Caco-2 (cell line): ENCODE measurements at regions of chr3 and their contacts with region 1.

Region 1: GRCh38 chr3:130746246-130747039 is at the start of gene PIK3R4:
- DNase-seq: peak; percentile 96 to 98
- H3K4me3 ChIP-seq: peak within 1 kb of the TSS; percentile 86
- H3K4me3 Mint-ChIP-seq: no peak within 1 kb of the TSS
- H3K27ac Mint-ChIP-seq: peak within 1 kb of the TSS; percentile 96
- H3K4me1 ChIP-seq: peaks cover 6% of the 10 kb centered on the region
- H3K4me1 Mint-ChIP-seq: peaks cover 8% of the 10 kb centered on the region
- H3K27me3 ChIP-seq: no peaks in the 10 kb centered on the region
- H3K27me3 Mint-ChIP-seq: peaks cover 2% of the 10 kb centered on the region
- CTCF ChIP-seq: no peak
- total RNA-seq, gene PIK3R4: 20.0 and 23.1 TPM in 2 replicates

Region 2: DNA sequence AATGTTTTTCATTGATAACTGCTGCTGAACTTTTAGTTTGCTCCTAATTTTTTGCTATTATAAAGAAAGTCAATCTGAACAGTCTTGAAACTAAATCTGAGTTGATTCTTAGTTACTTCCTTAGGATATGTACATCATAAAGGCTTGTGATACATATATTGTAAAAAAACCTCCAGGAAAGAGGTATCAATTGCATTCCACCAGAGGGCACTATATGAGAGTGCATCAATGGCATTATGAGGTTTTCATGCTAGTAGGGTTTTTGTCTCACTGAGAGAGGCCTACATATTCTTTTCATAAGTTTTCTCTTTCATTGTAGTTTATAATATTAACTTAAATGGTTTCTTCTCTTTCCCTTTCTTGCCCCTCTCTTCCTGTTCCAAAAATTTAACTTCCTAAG is 46.7 kb before region 1 on chr3:
- CTCF ChIA-PET with region 1: no interaction called
- POLR2A ChIA-PET with region 1: no interaction called
- intact Hi-C with region 1: loop called (anchors 5 kb)
- DNase-seq: peak in 1 of 2 experiments; percentile 27
- H3K4me3 ChIP-seq: no peak overlapping the region
- H3K4me3 Mint-ChIP-seq: no peak overlapping the region
- H3K27ac Mint-ChIP-seq: no peak overlapping the region
- H3K4me1 ChIP-seq: 0 out of 2 replicates have a peak, but pooled peaks cover 4% of the 10 kb centered on the region
- H3K4me1 Mint-ChIP-seq: peaks cover 12% of the 10 kb centered on the region
- H3K27me3 ChIP-seq: no peaks in the 10 kb centered on the region
- H3K27me3 Mint-ChIP-seq: no peaks in the 10 kb centered on the region
- CTCF ChIP-seq: peak in 1 of 2 experiments; percentile 73

Region 3: GRCh38 chr3:130733236-130733875 is 13.1 kb before region 1 on chr3:
- CTCF ChIA-PET with region 1: no interaction called
- POLR2A ChIA-PET with region 1: no interaction called
- intact Hi-C with region 1: loop called (anchors 2 kb)
- DNase-seq: no peak
- H3K4me3 ChIP-seq: no peak overlapping the region; the same call in 1 of the 2 replicates
- H3K4me3 Mint-ChIP-seq: peak overlapping the region; percentile 9
- H3K27ac Mint-ChIP-seq: no peak overlapping the region
- H3K4me1 ChIP-seq: peaks cover 22% of the 10 kb centered on the region
- H3K4me1 Mint-ChIP-seq: peaks cover 6% of the 10 kb centered on the region
- H3K27me3 ChIP-seq: no peaks in the 10 kb centered on the region
- H3K27me3 Mint-ChIP-seq: no peaks in the 10 kb centered on the region
- CTCF ChIP-seq: no peak

Region 4: DNA sequence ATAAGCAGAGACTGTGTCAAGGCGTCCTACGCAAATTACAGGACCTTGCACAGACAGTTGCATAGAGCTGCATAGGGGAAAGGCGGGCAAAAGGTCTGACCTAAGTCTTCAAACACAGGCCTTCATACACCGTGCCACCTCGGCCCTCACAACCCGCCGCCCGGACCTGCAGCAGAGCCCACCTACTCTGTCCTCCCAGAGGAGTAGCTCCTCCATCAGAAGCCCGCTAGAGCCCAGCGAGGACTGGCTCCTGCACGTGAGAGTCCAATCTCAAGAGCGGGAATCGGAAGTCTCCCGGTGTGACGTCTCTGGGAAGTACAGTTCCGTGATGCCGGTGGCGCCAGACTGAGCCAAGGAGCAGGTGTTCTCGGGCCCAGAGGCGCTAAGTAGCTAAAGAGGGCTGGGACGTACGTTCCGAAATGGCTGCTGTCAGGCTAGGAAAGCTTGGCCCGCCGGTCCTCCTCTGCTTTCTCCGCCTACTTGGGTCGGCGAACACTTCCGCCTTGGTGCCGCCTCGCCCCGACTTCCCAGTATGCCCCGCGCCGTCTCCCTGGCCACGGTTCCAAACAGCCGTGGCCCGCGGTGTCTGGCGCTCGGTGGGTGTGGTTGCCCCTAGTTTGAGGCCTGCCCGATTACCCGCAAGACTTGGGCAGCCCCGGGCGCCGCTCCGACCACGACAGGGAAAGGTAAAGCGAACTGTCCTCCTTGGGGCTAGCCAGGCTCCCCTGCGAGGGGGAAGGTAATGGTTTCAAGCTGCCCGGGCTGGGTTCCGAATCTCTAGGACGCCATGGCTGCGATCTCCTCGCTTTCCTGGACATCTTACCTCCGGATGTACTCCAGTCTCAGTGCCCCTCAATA is 280.1 kb after region 1 on chr3 and contains the starts of genes ASTE1 and NEK11:
- CTCF ChIA-PET with region 1: no interaction called
- POLR2A ChIA-PET with region 1: interaction called, 3 read pairs
- intact Hi-C with region 1: loop called (anchors 10 kb)
- DNase-seq: peak; percentile 88 to 92
- H3K4me3 ChIP-seq: peak within 1 kb of the TSS; percentile 60
- H3K4me3 Mint-ChIP-seq: peak within 1 kb of the TSS; percentile 82
- H3K27ac Mint-ChIP-seq: peak within 1 kb of the TSS; percentile 95
- H3K4me1 ChIP-seq: peaks cover 19% of the 10 kb centered on the region; the same call in 1 of the 2 replicates
- H3K4me1 Mint-ChIP-seq: peaks cover 23% of the 10 kb centered on the region
- H3K27me3 ChIP-seq: no peaks in the 10 kb centered on the region
- H3K27me3 Mint-ChIP-seq: no peaks in the 10 kb centered on the region
- CTCF ChIP-seq: no peak
- total RNA-seq, gene ASTE1: 8.7 and 11.0 TPM in 2 replicates
- total RNA-seq, gene NEK11: 3.9 and 4.4 TPM in 2 replicates